PC-3 (cell line): ENCODE measurements at regions of chr13 and their contacts with region 1.

Region 1: DNA sequence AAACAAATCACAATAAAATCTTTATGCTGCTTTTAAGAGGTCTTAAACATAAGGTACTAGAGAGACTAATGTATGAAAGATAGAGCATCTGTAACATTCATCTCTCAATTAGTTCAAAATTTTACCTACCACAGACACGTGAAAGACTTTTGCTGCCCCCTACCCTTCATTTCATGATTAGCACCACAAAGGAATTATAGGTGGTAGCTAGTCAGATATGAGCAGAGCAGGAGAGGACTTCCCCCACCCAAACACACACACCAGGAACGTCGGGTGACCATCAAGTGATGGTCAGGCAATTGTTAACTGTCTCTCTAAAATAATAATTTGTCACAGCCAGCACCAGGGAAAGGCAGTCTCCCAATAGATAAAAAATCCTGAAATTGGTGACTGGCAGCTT is 1531.7 kb upstream of the SPRY2 start:
- DNase-seq: peak; percentile 43
- ATAC-seq: peak; percentile 50
- H3K4me3 ChIP-seq: no peak overlapping the region
- H3K27ac ChIP-seq: no peak overlapping the region
- H3K4me1 ChIP-seq: peaks cover 5% of the 10 kb centered on the region; the same call in 1 of the 2 replicates
- H3K27me3 ChIP-seq: no peaks in the 10 kb centered on the region
- CTCF ChIP-seq: peak; percentile 59

Region 2: GRCh38 chr13:81058916-81059290 is 813.7 kb before region 1 on chr13:
- CTCF ChIA-PET with region 1: no interaction called
- POLR2A ChIA-PET with region 1: no interaction called
- intact Hi-C with region 1: loop called (anchors 5 kb)
- DNase-seq: peak; percentile 49
- ATAC-seq: peak; percentile 87
- H3K4me3 ChIP-seq: no peak overlapping the region
- H3K27ac ChIP-seq: 0 out of 2 replicates have a peak overlapping the region, but pooled peaks have one; percentile 6
- H3K4me1 ChIP-seq: peaks cover 18% of the 10 kb centered on the region
- H3K27me3 ChIP-seq: no peaks in the 10 kb centered on the region
- CTCF ChIP-seq: no peak

Region 3: GRCh38 chr13:81171065-81171647 is 701.4 kb before region 1 on chr13:
- CTCF ChIA-PET with region 1: no interaction called
- POLR2A ChIA-PET with region 1: no interaction called
- intact Hi-C with region 1: loop called (anchors 5 kb)
- DNase-seq: peak; percentile 54
- ATAC-seq: peak; percentile 42; the same call in 1 of the 2 replicates
- H3K4me3 ChIP-seq: no peak overlapping the region
- H3K27ac ChIP-seq: no peak overlapping the region
- H3K4me1 ChIP-seq: no peaks in the 10 kb centered on the region
- H3K27me3 ChIP-seq: no peaks in the 10 kb centered on the region
- CTCF ChIP-seq: peak; percentile 67

Region 4: GRCh38 chr13:81487151-81487550 is 385.4 kb before region 1 on chr13:
- CTCF ChIA-PET with region 1: interaction called, 4 read pairs
- POLR2A ChIA-PET with region 1: no interaction called
- intact Hi-C with region 1: loop called (anchors 1 kb)
- DNase-seq: peak; percentile 61
- ATAC-seq: peak; percentile 77
- H3K4me3 ChIP-seq: no peak overlapping the region
- H3K27ac ChIP-seq: no peak overlapping the region
- H3K4me1 ChIP-seq: no peaks in the 10 kb centered on the region
- H3K27me3 ChIP-seq: no peaks in the 10 kb centered on the region
- CTCF ChIP-seq: peak; percentile 55

Region 5: GRCh38 chr13:81540777-81541176 is 331.8 kb before region 1 on chr13:
- CTCF ChIA-PET with region 1: interaction called, 3 read pairs
- POLR2A ChIA-PET with region 1: no interaction called
- intact Hi-C with region 1: loop called (anchors 1 kb)
- DNase-seq: peak; percentile 3
- ATAC-seq: no peak
- H3K4me3 ChIP-seq: no peak overlapping the region
- H3K27ac ChIP-seq: no peak overlapping the region
- H3K4me1 ChIP-seq: no peaks in the 10 kb centered on the region
- H3K27me3 ChIP-seq: no peaks in the 10 kb centered on the region
- CTCF ChIP-seq: peak; percentile 61

Region 6: GRCh38 chr13:81639984-81640582 is 232.5 kb before region 1 on chr13:
- CTCF ChIA-PET with region 1: interaction called, 21 read pairs
- POLR2A ChIA-PET with region 1: no interaction called
- intact Hi-C with region 1: loop called (anchors 1 kb)
- DNase-seq: peak; percentile 56
- ATAC-seq: peak; percentile 49; the same call in 1 of the 2 replicates
- H3K4me3 ChIP-seq: no peak overlapping the region
- H3K27ac ChIP-seq: no peak overlapping the region
- H3K4me1 ChIP-seq: no peaks in the 10 kb centered on the region
- H3K27me3 ChIP-seq: no peaks in the 10 kb centered on the region
- CTCF ChIP-seq: peak; percentile 73